ENCODE measurements at regions of chr19 and their contacts with region 1.

Region 1: DNA sequence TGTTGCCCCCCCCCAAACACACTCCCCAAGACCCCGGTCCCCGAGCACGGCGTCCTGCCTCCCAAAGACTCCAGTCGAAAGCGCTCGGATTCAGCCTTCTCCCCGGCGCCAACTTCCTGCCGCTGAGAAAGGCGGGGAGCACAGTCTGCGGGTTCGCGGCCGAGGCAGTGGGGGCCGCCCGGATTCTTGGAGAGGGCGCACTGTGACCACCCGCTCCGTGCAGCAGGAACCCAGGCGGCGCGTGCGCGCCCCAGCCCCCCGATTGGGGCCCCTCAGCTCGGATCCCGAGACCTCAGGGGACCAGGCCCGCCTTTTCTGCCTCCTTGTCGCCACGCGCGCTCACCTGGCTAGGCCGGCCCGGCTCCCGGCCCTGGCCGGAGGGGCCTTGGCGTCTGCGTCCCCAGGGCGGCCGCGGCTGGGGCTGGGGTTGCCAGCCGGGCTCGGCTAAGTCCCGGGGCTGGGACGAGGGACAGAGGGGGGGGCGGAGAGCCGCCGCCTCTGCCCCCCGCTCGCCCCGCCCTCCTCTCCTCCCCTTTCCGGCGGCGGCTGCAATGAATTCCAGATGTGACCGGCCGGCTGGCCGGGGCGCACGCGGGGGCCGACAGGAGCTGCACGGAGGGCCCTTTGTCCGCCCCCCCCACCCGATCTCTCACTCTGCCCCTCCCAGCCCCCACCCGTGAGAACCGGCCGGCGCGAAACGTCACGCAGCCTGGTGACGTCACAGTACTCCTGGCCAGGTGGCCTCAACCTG is at the start of gene S1PR2:
- DNase-seq: peak; percentile 64
- ATAC-seq: peak; percentile 25
- H3K4me3 Mint-ChIP-seq: peak within 1 kb of the TSS; percentile 84
- H3K27ac Mint-ChIP-seq: peak within 1 kb of the TSS; percentile 46
- H3K4me1 Mint-ChIP-seq: peaks cover 46% of the 10 kb centered on the region
- H3K27me3 Mint-ChIP-seq: no peaks in the 10 kb centered on the region
- CTCF ChIP-seq: no peak
- total RNA-seq, gene S1PR2: 5.3 and 5.6 TPM in 2 replicates

Region 2: GRCh38 chr19:9785367-9786331 is 445.4 kb before region 1 on chr19:
- CTCF ChIA-PET with region 1: no interaction called
- POLR2A ChIA-PET with region 1: no interaction called
- intact Hi-C with region 1: no loop called
- DNase-seq: peak; percentile 86
- ATAC-seq: peak; percentile 84
- H3K4me3 Mint-ChIP-seq: peak overlapping the region; percentile 91
- H3K27ac Mint-ChIP-seq: peak overlapping the region; percentile 96
- H3K4me1 Mint-ChIP-seq: peaks cover 15% of the 10 kb centered on the region
- H3K27me3 Mint-ChIP-seq: no peaks in the 10 kb centered on the region
- CTCF ChIP-seq: no peak

Region 3: DNA sequence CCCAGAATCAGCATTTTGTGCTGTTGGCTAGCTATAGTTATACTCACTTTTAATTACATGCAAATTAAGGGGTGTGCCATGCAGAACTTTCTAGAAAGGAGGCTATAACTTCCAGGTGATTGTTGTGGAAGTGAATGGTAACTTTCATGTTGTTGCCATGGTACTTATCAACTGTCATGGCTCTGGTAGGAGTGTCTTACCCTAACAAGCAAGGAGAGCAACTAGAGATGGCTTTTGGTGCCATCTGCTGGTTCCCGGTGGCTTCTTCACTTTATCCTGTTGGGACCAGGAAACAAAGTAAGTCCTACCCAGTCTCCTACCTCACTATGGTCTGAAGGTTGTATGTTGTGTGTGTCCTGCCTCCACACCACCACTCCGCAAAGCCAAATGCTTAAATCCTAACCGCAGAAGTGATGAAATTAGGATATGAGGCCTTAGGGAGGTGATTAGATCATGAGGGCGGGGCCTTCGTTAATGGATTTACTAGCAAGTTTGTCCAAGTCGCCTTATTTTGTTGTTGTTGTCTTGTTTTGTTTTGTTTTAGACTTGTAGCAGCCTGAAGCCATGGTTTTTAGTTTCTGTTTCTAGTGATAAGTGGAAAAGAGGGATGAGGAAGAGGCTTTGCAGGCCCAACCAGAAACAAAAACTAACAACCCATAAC is 434.8 kb before region 1 on chr19:
- CTCF ChIA-PET with region 1: no interaction called
- POLR2A ChIA-PET with region 1: no interaction called
- intact Hi-C with region 1: no loop called
- DNase-seq: peak; percentile 62
- ATAC-seq: peak; percentile 16
- H3K4me3 Mint-ChIP-seq: no peak overlapping the region
- H3K27ac Mint-ChIP-seq: peak overlapping the region; percentile 70
- H3K4me1 Mint-ChIP-seq: peaks cover 12% of the 10 kb centered on the region
- H3K27me3 Mint-ChIP-seq: no peaks in the 10 kb centered on the region
- CTCF ChIP-seq: no peak

Region 4: DNA sequence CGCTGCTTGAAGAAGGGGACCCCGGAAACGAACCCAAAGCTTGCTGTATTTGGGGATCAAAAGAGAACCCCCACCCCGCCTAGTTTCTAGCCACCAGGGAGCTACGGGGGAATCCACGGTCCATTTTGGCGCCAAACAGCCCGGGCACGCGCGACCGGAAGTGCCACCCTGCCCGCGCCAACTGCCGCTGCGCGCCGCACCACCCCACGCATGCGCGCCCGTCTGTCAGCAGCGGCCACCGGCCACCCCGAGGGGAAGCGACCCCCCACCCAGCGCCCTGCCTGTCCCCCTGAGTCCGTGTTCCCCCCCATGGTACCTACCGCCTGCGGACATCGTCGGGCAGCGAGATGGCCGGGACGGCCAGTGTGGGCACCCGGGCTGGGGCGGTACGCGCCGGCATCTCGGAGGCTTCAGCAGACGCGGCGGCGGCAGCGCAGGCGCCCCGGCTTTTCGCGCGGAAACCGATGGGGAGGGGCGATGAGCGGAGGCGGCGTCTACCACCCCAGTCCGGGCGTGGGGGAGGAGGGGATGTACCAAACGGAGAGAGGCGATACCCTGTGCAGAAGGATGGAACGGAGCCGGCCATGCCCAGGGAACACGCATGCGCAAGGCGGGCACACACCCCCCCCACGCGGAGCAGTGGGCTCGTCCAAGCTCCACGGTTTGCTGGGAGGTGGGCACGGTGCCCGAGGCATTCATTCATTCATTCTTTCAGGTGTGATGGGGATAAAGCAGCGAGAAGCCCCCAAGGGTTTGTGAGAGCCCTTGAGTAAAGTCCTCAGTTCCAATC is 36.3 kb before region 1 on chr19 and contains the start of gene DNMT1:
- CTCF ChIA-PET with region 1: no interaction called
- POLR2A ChIA-PET with region 1: interaction called, 18 read pairs
- intact Hi-C with region 1: loop called (anchors 2 kb)
- DNase-seq: peak; percentile 94
- ATAC-seq: peak; percentile 97
- H3K4me3 Mint-ChIP-seq: peak within 1 kb of the TSS; percentile 94
- H3K27ac Mint-ChIP-seq: peak within 1 kb of the TSS; percentile 89
- H3K4me1 Mint-ChIP-seq: peaks cover 34% of the 10 kb centered on the region
- H3K27me3 Mint-ChIP-seq: no peaks in the 10 kb centered on the region
- CTCF ChIP-seq: no peak
- total RNA-seq, gene DNMT1: 136 and 156 TPM in 2 replicates

Region 5: DNA sequence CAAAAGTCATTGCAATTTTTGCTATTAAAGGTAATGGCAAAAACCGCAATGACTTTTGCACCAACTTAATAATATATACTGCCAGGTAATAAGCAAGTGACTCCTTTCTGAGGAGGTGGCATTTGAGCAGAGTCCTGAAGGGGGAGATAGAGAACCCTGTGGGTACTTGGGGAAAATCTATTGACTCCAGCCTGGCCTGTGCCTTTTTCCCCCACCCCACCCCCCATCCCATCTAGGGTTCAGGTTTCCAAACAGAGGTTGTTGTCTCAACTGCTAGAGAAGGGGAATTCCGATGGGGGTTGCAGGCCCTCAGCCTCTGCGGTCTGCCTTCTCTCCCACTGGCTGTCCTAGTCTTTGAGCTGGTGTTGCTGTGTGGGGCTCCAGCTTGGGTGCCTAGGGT is 11.4 kb before region 1 on chr19:
- CTCF ChIA-PET with region 1: no interaction called
- POLR2A ChIA-PET with region 1: interaction called, 10 read pairs
- intact Hi-C with region 1: no loop called
- DNase-seq: no peak
- ATAC-seq: peak; percentile 87
- H3K4me3 Mint-ChIP-seq: no peak overlapping the region
- H3K27ac Mint-ChIP-seq: no peak overlapping the region
- H3K4me1 Mint-ChIP-seq: peaks cover 9% of the 10 kb centered on the region
- H3K27me3 Mint-ChIP-seq: no peaks in the 10 kb centered on the region
- CTCF ChIP-seq: no peak

Region 6: GRCh38 chr19:10277795-10278589 is 47.0 kb after region 1 on chr19:
- CTCF ChIA-PET with region 1: no interaction called
- POLR2A ChIA-PET with region 1: no interaction called
- intact Hi-C with region 1: no loop called
- DNase-seq: no peak
- ATAC-seq: no peak
- H3K4me3 Mint-ChIP-seq: peak overlapping the region; percentile 15
- H3K27ac Mint-ChIP-seq: peak overlapping the region; percentile 50
- H3K4me1 Mint-ChIP-seq: peaks cover 39% of the 10 kb centered on the region
- H3K27me3 Mint-ChIP-seq: no peaks in the 10 kb centered on the region
- CTCF ChIP-seq: no peak

Region 7: GRCh38 chr19:11090054-11090900 is 859.2 kb after region 1 on chr19:
- CTCF ChIA-PET with region 1: no interaction called
- POLR2A ChIA-PET with region 1: no interaction called
- intact Hi-C with region 1: loop called (anchors 10 kb)
- DNase-seq: peak; percentile 71
- ATAC-seq: peak; percentile 87
- H3K4me3 Mint-ChIP-seq: peak overlapping the region; percentile 78
- H3K27ac Mint-ChIP-seq: peak overlapping the region; percentile 30
- H3K4me1 Mint-ChIP-seq: peaks cover 41% of the 10 kb centered on the region
- H3K27me3 Mint-ChIP-seq: peaks cover 15% of the 10 kb centered on the region
- CTCF ChIP-seq: no peak